ENCODE measurements at regions of chr6 and their contacts with region 1.

Region 1: DNA sequence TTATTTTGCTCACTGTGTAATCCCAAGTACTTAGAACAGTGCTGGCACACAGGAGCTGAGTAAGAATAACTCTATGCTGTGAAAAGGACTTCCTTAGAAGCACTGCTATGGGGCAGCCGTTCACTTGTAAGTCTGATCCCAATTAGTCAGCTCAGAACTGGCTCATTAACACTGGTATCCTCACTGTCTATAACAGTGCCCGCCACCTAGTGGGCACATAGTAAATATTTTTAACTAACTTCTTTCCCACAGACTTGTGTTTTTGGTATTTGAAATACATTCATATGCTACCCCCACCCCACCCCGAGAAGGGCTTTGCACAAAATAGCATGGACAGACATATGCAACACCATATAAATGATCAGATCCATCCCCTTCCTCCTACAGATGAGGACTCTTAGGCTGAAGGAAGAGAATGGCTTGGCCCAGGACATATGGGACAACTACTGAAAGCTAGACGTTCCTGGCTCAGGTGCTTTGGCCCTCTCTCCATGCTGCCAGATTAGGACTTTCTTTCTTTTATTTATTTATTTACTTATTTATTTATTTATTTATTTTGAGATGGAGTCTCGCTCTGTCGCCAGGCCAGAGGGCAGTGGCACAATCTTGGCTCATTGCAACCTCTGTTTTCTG is 47.1 kb downstream of the DST start:
- DNase-seq: peak; percentile 31
- ATAC-seq: peak; percentile 70
- H3K4me3 ChIP-seq: no peak overlapping the region
- H3K27ac ChIP-seq: peak overlapping the region; percentile 62
- H3K4me1 ChIP-seq: peaks cover 25% of the 10 kb centered on the region
- H3K27me3 ChIP-seq: no peaks in the 10 kb centered on the region
- CTCF ChIP-seq: peak; percentile 62 to 70 (median 68)
- EP300 ChIP-seq: no peak
- POLR2A ChIP-seq: no peak
- RAD21 ChIP-seq: peak; percentile 28

Region 2: DNA sequence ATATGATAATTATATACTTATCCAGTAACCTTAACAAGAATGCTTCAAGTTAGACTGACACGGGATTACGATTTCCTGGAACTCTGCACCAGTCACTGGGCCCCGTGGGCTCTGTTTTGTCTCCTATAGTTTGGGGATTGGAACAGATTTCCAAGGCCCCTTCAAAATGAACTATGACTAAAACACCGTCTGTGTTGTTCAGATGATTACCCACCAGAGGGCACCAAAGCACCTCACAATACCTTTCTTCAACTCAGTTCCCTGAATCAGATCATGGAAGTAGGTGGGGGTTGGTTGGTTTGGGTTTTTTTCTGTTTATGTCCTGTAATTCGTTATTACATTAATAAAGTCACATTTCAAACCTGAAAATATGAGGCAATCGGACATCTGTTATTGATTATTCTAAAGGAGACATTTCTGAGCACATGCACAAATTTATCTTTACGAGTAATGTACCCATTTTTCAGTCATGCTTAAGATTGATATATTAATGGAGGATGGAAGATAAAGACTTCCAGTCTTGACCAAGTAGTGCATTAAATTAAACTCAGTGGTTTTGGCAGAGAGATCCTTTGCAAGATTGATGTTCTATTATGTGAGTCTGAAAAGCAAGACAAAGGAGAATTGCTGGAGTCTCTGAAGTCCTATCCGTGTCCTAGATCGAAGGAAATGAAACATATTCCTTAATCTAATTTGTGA is 236.3 kb before region 1 on chr6:
- CTCF ChIA-PET with region 1: interaction called, 54 read pairs
- POLR2A ChIA-PET with region 1: no interaction called
- RAD21 ChIA-PET with region 1: interaction called, 9 read pairs
- SMC1A ChIA-PET with region 1: interaction called, 22 read pairs
- in situ Hi-C with region 1: loop called (anchors 5 kb)
- intact Hi-C with region 1: loop called (anchors 1 kb)
- DNase-seq: peak; percentile 26
- ATAC-seq: peak; percentile 94
- H3K4me3 ChIP-seq: no peak overlapping the region
- H3K27ac ChIP-seq: no peak overlapping the region
- H3K4me1 ChIP-seq: no peaks in the 10 kb centered on the region
- H3K27me3 ChIP-seq: no peaks in the 10 kb centered on the region
- CTCF ChIP-seq: peak; percentile 65 to 82 (median 77); a peak in 5 of 6 replicates
- EP300 ChIP-seq: no peak
- POLR2A ChIP-seq: no peak
- RAD21 ChIP-seq: peak; percentile 99

Region 3: DNA sequence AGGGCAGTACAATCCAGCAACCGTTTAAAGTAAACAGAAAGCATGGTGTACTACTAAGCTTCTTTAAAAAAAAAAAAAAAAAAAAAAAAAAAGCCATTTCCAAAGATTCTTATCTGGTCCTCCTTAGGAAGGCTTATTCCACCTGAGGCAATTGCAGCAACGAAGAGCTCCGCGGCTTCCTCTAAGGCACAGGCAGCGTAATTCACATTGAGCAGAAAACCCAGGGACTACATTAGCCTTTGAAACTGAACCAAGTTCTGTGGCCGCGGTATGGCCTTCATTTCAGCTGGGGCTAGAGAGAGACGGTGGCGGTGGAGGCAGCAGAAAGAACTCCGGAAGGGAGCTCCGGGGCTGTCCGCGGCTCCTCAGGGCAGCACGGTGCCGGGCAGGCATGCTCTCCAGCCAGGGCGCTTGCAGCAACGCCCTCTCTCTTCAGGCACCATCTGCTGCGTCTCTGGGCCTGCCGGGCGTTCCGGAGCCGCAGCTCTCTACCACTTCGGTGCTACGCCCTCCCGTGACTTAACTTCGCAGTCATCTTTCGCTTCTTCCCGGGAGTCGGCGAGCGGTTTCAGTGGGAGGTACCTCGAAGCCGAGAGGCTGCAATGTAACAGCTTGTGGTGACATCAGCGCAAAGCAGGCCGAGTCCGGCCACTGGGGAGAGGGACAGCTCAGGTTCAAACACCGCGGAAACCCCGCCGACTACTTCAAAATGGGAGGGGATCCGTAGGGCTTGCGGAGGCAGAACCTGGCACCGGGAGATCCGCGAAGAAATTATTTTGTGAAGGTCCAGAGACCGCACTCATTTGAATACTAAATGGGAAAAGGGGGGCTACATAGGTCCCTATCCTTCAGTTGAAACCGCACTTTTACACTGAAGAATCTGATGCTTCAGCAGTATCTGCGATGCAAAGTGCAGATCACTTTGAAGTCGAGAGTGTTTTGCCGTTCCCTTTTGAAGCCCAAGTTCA is 53.0 kb before region 1 on chr6:
- CTCF ChIA-PET with region 1: interaction called, 84 read pairs
- POLR2A ChIA-PET with region 1: interaction called, 26 read pairs
- RAD21 ChIA-PET with region 1: interaction called, 36 read pairs
- SMC1A ChIA-PET with region 1: interaction called, 24 read pairs
- in situ Hi-C with region 1: no loop called
- intact Hi-C with region 1: loop called (anchors 2 kb)
- DNase-seq: peak; percentile 91
- ATAC-seq: peak; percentile 93
- H3K4me3 ChIP-seq: peak overlapping the region; percentile 73
- H3K27ac ChIP-seq: peak overlapping the region; percentile 70
- H3K4me1 ChIP-seq: peaks cover 13% of the 10 kb centered on the region; the same call in 1 of the 2 replicates
- H3K27me3 ChIP-seq: no peaks in the 10 kb centered on the region
- CTCF ChIP-seq: peak in 2 of 3 experiments; percentile 6 to 11; a peak in 2 of 6 replicates
- EP300 ChIP-seq: 0 out of 4 replicates have a peak, but pooled peaks of 1 of the 2 experiments have one; percentile 7
- POLR2A ChIP-seq: peak; percentile 90
- RAD21 ChIP-seq: no peak

Region 4: DNA sequence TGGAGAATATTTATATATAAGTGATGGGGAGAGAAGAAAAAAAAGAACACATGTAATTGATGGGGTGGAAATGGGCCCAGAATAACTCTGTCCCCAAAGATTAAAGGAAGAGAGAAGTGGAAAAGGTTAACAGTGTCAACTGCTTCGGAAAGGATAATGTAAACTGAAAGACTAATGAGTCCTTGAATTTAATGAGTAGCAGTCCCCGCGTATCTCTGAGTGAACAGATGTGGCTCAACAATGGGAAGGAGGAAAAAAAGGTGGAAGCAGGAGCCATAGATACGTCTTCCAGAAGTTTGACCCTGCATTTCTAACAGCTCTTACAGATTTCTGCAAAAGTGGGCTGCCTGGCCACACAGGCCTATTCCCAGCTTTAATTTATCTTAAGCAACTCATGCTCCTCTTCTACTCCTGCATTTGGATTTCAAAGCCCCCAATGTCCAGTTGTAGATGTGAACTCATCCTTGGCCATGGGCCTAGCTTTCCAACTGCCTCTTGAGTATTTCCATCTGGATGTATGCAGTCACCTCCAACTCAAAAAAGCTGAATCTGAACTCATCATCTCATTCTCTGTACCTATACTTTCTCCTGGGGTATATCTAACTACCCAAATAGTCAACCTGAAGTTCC is 14.2 kb before region 1 on chr6:
- CTCF ChIA-PET with region 1: interaction called, 39 read pairs
- POLR2A ChIA-PET with region 1: no interaction called
- RAD21 ChIA-PET with region 1: interaction called, 4 read pairs
- SMC1A ChIA-PET with region 1: interaction called, 11 read pairs
- in situ Hi-C with region 1: no loop called
- intact Hi-C with region 1: no loop called
- DNase-seq: no peak
- ATAC-seq: no peak
- H3K4me3 ChIP-seq: no peak overlapping the region
- H3K27ac ChIP-seq: no peak overlapping the region
- H3K4me1 ChIP-seq: no peaks in the 10 kb centered on the region
- H3K27me3 ChIP-seq: no peaks in the 10 kb centered on the region
- CTCF ChIP-seq: no peak
- EP300 ChIP-seq: no peak
- POLR2A ChIP-seq: no peak
- RAD21 ChIP-seq: no peak

Region 5: DNA sequence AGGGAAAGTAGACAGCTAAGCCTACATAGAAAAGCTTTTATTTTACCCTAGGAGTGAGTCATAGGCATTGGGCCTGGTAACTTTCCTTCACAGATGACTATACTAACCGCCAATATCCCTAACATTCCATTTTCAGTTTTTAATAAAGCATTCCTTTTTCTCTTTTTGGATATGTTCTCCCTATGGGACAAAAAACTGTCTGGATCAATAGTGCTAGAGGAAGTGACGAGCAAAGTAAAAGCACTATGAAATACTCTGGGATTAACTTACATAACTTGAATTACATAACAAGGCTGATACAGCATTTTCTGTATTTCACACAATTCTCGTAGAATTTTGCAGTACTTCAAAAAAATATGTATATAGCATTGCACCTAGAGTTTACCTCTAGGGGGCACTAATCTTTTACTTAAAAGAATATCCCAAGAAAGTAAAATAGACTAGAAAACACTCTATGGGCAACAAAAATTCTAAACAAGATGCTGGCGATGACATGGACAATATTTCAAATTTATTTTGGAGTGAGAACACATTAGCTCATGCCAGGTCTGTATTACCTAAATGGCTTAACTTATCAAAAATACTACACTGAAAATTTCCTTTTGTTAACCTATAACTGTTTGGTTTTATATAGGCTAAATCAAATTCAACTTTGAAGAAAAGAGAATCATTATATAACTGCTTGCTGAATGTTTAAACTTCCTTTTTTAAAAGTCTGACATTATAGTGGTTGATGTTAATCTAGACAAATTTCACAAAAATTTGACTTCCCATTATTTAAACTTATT is 113.4 kb after region 1 on chr6:
- CTCF ChIA-PET with region 1: interaction called, 17 read pairs
- POLR2A ChIA-PET with region 1: no interaction called
- RAD21 ChIA-PET with region 1: interaction called, 3 read pairs
- SMC1A ChIA-PET with region 1: interaction called, 5 read pairs
- in situ Hi-C with region 1: no loop called
- intact Hi-C with region 1: no loop called
- DNase-seq: no peak
- ATAC-seq: peak; percentile 72
- H3K4me3 ChIP-seq: no peak overlapping the region
- H3K27ac ChIP-seq: 0 out of 2 replicates have a peak overlapping the region, but pooled peaks have one; percentile 1
- H3K4me1 ChIP-seq: peaks cover 8% of the 10 kb centered on the region
- H3K27me3 ChIP-seq: no peaks in the 10 kb centered on the region
- CTCF ChIP-seq: peak; percentile 29 to 54 (median 53); a peak in 4 of 6 replicates
- EP300 ChIP-seq: no peak
- POLR2A ChIP-seq: no peak
- RAD21 ChIP-seq: peak; percentile 45

Measured in GM12878 (cell line).